Heart right ventricle (tissue), 16 donors: ENCODE measurements at regions of chr5 and their contacts with region 1.

Region 1: DNA sequence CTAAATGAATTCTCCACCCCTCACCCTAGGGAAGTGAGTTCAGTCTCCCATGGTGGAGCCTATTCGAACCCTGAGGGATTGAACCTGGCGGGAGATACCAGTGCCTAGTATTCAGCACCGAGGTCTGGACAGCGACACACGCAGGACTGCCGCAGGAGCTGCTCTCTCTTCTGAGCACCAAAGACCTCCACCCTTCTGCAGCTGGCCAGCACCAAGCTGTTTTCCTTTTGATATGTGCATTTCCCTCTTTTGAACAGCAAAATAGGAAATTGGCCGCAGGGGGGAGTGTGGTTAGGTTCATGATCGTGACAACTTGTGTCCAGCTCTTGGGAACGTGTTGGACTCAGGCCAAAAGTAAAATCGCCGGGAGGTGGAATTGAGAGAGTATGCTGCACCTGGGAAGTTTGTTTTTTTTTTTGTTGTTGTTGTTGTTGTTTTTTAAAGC is 1.2 kb upstream of the PCSK1 start:
- DNase-seq: peak; percentile 59 to 69
- ATAC-seq: peak; percentile 69 to 88 (median 80)
- H3K4me3 ChIP-seq: no peak overlapping the region
- H3K27ac ChIP-seq: no peak overlapping the region
- H3K4me1 ChIP-seq: peaks cover 0 to 36% (median 14%) of the 10 kb centered on the region in 9 donors
- H3K27me3 ChIP-seq: peaks cover 0 to 91% (median 60%) of the 10 kb centered on the region in 7 donors
- CTCF ChIP-seq: no peak

Region 2: GRCh38 chr5:96293966-96294883 is 140.0 kb before region 1 on chr5:
- intact Hi-C with region 1: no loop called
- DNase-seq: peak in 1 of 2 donors; percentile 19
- ATAC-seq: peak in 7 of 8 donors; percentile 58 to 87 (median 78)
- H3K4me3 ChIP-seq: no peak overlapping the region
- H3K27ac ChIP-seq: peak overlapping the region; percentile 7 to 77 (median 70)
- H3K4me1 ChIP-seq: peaks cover 0 to 46% (median 25%) of the 10 kb centered on the region in 9 donors
- H3K27me3 ChIP-seq: no peaks in the 10 kb centered on the region
- CTCF ChIP-seq: no peak

Region 3: GRCh38 chr5:96565582-96566265 is 131.5 kb after region 1 on chr5:
- intact Hi-C with region 1: loop called in 1 of 10 experiments (anchors 10 kb)
- DNase-seq: no peak
- ATAC-seq: no peak
- H3K4me3 ChIP-seq: no peak overlapping the region
- H3K27ac ChIP-seq: no peak overlapping the region
- H3K4me1 ChIP-seq: peaks cover 0 to 9% (median 0%) of the 10 kb centered on the region in 9 donors
- H3K27me3 ChIP-seq: no peaks in the 10 kb centered on the region
- CTCF ChIP-seq: no peak

Region 4: GRCh38 chr5:97062046-97062445 is 627.8 kb after region 1 on chr5:
- intact Hi-C with region 1: no loop called
- DNase-seq: no peak
- ATAC-seq: no peak
- H3K4me3 ChIP-seq: no peak overlapping the region
- H3K27ac ChIP-seq: no peak overlapping the region
- H3K4me1 ChIP-seq: peaks cover 0 to under 1% (median 0%) of the 10 kb centered on the region in 9 donors
- H3K27me3 ChIP-seq: no peaks in the 10 kb centered on the region
- CTCF ChIP-seq: no peak